ENCODE measurements at regions of chr10 and their contacts with region 1.

Region 1: DNA sequence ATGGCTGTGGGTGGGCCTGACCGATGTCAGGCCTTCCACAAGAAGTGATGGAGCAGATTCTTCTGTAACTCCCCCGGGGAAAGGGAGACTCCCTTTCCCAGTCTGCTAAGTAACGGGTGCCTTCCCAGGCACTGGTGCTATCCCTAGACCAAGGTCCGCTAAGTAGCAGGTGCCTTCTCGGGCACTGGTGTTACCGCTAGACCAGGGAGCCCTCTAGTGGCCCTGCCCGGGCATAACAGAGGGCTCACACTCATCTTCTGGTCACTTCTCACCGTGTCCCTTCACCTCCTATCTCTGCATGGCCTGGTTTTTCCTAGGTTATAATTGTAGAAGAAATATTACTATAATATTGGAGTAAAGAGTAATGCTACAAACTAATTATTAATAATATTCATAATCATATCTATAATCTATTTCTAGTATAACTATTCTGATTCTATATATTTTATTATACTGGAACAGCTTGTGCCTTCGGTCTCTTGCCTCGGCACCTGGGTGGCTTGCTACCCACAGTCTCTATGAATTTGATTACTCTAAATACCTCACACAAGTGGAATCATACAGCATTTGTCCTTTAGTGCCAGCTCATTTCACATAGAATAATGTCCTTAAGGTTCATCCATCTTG is 1378.7 kb downstream of the XPNPEP1 start:
- DNase-seq: peak; percentile 64
- H3K4me3 Mint-ChIP-seq: no peak overlapping the region
- H3K27ac Mint-ChIP-seq: no peak overlapping the region
- H3K4me1 Mint-ChIP-seq: no peaks in the 10 kb centered on the region
- H3K27me3 Mint-ChIP-seq: no peaks in the 10 kb centered on the region
- CTCF ChIP-seq: peak; percentile 96

Region 2: GRCh38 chr10:106705681-106706100 is 1838.9 kb before region 1 on chr10:
- CTCF ChIA-PET with region 1: interaction called, 3 read pairs
- POLR2A ChIA-PET with region 1: no interaction called
- intact Hi-C with region 1: loop called (anchors 2 kb)
- DNase-seq: peak; percentile 75
- H3K4me3 Mint-ChIP-seq: no peak overlapping the region
- H3K27ac Mint-ChIP-seq: peak overlapping the region; percentile 52
- H3K4me1 Mint-ChIP-seq: peaks cover 6% of the 10 kb centered on the region
- H3K27me3 Mint-ChIP-seq: no peaks in the 10 kb centered on the region
- CTCF ChIP-seq: peak; percentile 79

Region 3: GRCh38 chr10:108112219-108112618 is 432.4 kb before region 1 on chr10:
- CTCF ChIA-PET with region 1: no interaction called
- POLR2A ChIA-PET with region 1: no interaction called
- intact Hi-C with region 1: loop called (anchors 1 kb)
- DNase-seq: peak; percentile 26
- H3K4me3 Mint-ChIP-seq: no peak overlapping the region
- H3K27ac Mint-ChIP-seq: no peak overlapping the region
- H3K4me1 Mint-ChIP-seq: no peaks in the 10 kb centered on the region
- H3K27me3 Mint-ChIP-seq: no peaks in the 10 kb centered on the region
- CTCF ChIP-seq: peak; percentile 19

Region 4: GRCh38 chr10:108204479-108205305 is 339.9 kb before region 1 on chr10:
- CTCF ChIA-PET with region 1: interaction called, 3 read pairs
- POLR2A ChIA-PET with region 1: no interaction called
- intact Hi-C with region 1: loop called (anchors 5 kb)
- DNase-seq: peak; percentile 59
- H3K4me3 Mint-ChIP-seq: no peak overlapping the region
- H3K27ac Mint-ChIP-seq: no peak overlapping the region
- H3K4me1 Mint-ChIP-seq: no peaks in the 10 kb centered on the region
- H3K27me3 Mint-ChIP-seq: no peaks in the 10 kb centered on the region
- CTCF ChIP-seq: peak; percentile 75

Region 5: GRCh38 chr10:108358912-108359311 is 185.7 kb before region 1 on chr10:
- CTCF ChIA-PET with region 1: interaction called, 3 read pairs
- POLR2A ChIA-PET with region 1: no interaction called
- intact Hi-C with region 1: loop called (anchors 2 kb)
- DNase-seq: peak; percentile 88
- H3K4me3 Mint-ChIP-seq: no peak overlapping the region
- H3K27ac Mint-ChIP-seq: peak overlapping the region; percentile 2
- H3K4me1 Mint-ChIP-seq: peaks cover 6% of the 10 kb centered on the region
- H3K27me3 Mint-ChIP-seq: no peaks in the 10 kb centered on the region
- CTCF ChIP-seq: peak; percentile 31

Region 6: GRCh38 chr10:108561649-108562048 is 17.0 kb after region 1 on chr10:
- CTCF ChIA-PET with region 1: no interaction called
- POLR2A ChIA-PET with region 1: no interaction called
- intact Hi-C with region 1: no loop called
- DNase-seq: peak; percentile 40
- H3K4me3 Mint-ChIP-seq: no peak overlapping the region
- H3K27ac Mint-ChIP-seq: no peak overlapping the region
- H3K4me1 Mint-ChIP-seq: peaks cover 9% of the 10 kb centered on the region
- H3K27me3 Mint-ChIP-seq: no peaks in the 10 kb centered on the region
- CTCF ChIP-seq: no peak

Region 7: GRCh38 chr10:108817584-108817983 is 273.0 kb after region 1 on chr10:
- CTCF ChIA-PET with region 1: no interaction called
- POLR2A ChIA-PET with region 1: no interaction called
- intact Hi-C with region 1: no loop called
- DNase-seq: no peak
- H3K4me3 Mint-ChIP-seq: no peak overlapping the region
- H3K27ac Mint-ChIP-seq: no peak overlapping the region
- H3K4me1 Mint-ChIP-seq: no peaks in the 10 kb centered on the region
- H3K27me3 Mint-ChIP-seq: no peaks in the 10 kb centered on the region
- CTCF ChIP-seq: no peak

Region 8: DNA sequence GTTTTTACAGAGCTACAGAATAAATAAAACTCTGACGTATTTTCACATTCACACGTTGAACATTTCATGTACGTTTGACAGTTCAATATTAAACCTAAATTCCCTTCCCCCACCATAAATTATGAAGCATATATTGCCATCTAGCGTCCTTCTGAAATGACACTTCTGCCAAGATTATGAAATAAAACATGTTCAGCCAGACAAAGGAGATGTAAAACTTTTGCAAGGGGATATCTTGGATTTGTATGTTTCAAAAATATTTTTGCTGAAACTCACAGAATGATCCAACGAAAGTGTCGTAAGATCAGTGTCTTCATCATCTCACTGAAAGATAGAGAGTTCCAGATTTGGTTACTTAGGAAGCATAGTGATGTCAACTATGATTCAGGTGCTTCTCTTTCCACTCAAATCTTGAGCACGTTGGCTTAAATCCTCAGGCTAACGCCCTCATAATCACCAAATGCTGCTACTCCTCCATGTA is 474.4 kb after region 1 on chr10:
- CTCF ChIA-PET with region 1: interaction called, 6 read pairs
- POLR2A ChIA-PET with region 1: no interaction called
- intact Hi-C with region 1: loop called (anchors 2 kb)
- DNase-seq: peak; percentile 13
- H3K4me3 Mint-ChIP-seq: no peak overlapping the region
- H3K27ac Mint-ChIP-seq: no peak overlapping the region
- H3K4me1 Mint-ChIP-seq: peaks cover 8% of the 10 kb centered on the region
- H3K27me3 Mint-ChIP-seq: no peaks in the 10 kb centered on the region
- CTCF ChIP-seq: peak; percentile 36

Region 9: DNA sequence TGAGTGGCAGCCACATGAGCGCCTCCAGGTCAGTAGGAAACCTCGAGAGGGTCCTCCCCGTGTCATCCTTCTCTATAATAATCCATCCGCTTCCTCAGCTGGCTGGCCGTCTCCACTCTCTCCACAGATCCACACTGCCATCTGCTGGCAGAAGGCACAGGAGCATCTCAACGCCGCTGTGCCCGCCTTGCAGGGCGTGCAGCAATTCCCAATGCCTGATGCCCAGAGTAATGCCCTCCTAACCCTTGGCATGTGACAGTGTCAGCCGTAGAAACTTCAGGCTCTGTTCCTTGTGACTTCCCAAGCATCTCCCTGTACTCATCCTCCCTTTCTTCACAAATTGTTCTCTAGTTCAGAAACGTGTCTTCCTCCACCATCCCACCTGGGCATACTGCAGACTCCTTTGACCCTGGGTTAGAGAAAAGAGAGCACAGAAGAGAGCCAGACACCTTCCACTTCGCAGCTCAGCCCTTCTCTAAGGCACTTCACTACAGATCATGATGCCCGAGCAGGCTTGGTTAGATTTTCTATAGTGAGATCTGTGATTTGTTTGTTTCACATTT is 1307.9 kb after region 1 on chr10:
- CTCF ChIA-PET with region 1: interaction called, 3 read pairs
- POLR2A ChIA-PET with region 1: no interaction called
- intact Hi-C with region 1: loop called (anchors 2 kb)
- DNase-seq: peak; percentile 82
- H3K4me3 Mint-ChIP-seq: no peak overlapping the region
- H3K27ac Mint-ChIP-seq: no peak overlapping the region
- H3K4me1 Mint-ChIP-seq: peaks cover 9% of the 10 kb centered on the region
- H3K27me3 Mint-ChIP-seq: no peaks in the 10 kb centered on the region
- CTCF ChIP-seq: peak; percentile 96

Measured in MCF 10A (cell line).